ENCODE measurements at regions of chr7 and their contacts with region 1.

Region 1: GRCh38 chr7:157027568-157028198 is 17.2 kb upstream of the MNX1 start:
- DNase-seq: no peak
- ATAC-seq: no peak
- H3K4me3 Mint-ChIP-seq: no peak overlapping the region
- H3K27ac Mint-ChIP-seq: no peak overlapping the region
- H3K4me1 Mint-ChIP-seq: no peaks in the 10 kb centered on the region
- H3K27me3 Mint-ChIP-seq: peaks cover 65% of the 10 kb centered on the region

Region 2: GRCh38 chr7:156975620-156976019 is 52.1 kb before region 1 on chr7:
- CTCF ChIA-PET with region 1: no interaction called
- POLR2A ChIA-PET with region 1: no interaction called
- intact Hi-C with region 1: no loop called
- DNase-seq: no peak
- ATAC-seq: no peak
- H3K4me3 Mint-ChIP-seq: no peak overlapping the region
- H3K27ac Mint-ChIP-seq: no peak overlapping the region
- H3K4me1 Mint-ChIP-seq: no peaks in the 10 kb centered on the region
- H3K27me3 Mint-ChIP-seq: no peaks in the 10 kb centered on the region

Region 3: GRCh38 chr7:156993021-156993924 is 34.4 kb before region 1 on chr7:
- CTCF ChIA-PET with region 1: no interaction called
- POLR2A ChIA-PET with region 1: no interaction called
- intact Hi-C with region 1: loop called in 1 of 2 experiments (anchors 5 kb)
- DNase-seq: no peak
- ATAC-seq: no peak
- H3K4me3 Mint-ChIP-seq: no peak overlapping the region
- H3K27ac Mint-ChIP-seq: no peak overlapping the region
- H3K4me1 Mint-ChIP-seq: no peaks in the 10 kb centered on the region
- H3K27me3 Mint-ChIP-seq: peaks cover 28% of the 10 kb centered on the region

Region 4: DNA sequence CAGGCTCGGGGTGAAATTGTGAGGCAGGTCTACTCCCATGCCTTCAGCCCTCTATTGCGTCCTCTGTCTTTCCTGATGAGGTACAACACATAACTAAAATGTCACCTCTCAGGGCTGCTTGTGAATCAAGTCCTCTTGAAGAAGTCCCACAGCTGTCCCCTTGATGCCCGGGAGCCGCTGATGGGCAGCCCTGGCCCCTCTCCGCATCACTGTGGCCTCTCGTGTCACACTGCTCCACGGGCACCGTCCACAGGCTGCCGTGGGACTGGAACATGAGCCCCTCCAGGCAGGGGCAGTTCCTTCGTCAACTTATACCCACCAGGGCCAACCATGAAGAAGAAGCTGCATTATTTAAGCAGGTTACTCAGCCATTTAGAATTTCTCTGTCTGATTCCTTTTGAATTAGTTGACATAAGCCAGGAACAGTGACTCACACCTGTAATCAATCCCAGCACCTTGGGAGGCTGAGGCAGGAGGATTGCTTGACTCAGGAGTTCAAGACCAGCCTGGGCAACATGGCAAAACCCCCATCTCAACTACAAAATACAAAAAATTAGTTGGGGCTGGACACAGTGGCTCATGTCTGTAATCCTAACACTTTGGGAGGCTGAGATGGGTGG is 52.5 kb after region 1 on chr7:
- CTCF ChIA-PET with region 1: no interaction called
- POLR2A ChIA-PET with region 1: no interaction called
- intact Hi-C with region 1: no loop called
- DNase-seq: no peak
- ATAC-seq: no peak
- H3K4me3 Mint-ChIP-seq: no peak overlapping the region
- H3K27ac Mint-ChIP-seq: no peak overlapping the region
- H3K4me1 Mint-ChIP-seq: no peaks in the 10 kb centered on the region
- H3K27me3 Mint-ChIP-seq: peaks cover 33% of the 10 kb centered on the region

Region 5: DNA sequence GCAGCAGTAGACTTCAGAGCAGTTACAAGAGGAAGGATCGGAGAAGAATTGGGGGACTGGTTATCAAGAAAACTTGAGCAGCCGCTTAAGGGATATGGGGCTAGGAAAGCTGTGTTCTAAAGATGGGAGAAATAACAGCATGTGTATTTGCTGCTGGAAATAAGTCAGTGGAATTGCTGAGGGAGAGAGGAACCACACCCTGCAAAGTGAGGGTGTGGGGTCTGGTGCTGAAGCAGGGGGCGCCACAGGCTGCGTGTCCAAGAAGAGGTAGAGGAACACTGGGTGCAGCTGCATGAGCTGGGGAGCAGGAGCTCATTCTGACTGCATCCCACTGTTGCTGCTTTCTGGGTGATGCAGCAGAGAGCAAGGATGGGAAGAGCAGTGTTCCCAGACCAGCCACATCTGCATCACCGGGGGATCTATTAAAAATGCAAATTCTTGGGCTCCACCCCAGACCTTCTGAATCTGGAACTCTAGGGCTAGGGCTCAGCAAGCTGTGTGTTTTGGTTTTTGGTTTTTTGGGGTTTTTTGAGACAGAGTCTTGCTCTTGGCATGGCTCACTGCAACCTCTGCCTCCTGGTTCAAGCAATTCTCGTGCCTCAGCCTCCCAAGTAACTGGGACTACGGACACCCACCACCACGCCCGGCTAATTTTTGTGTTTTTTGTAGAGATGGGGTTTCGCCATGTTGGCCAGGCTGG is 212.0 kb after region 1 on chr7:
- CTCF ChIA-PET with region 1: no interaction called
- POLR2A ChIA-PET with region 1: no interaction called
- intact Hi-C with region 1: no loop called
- DNase-seq: no peak
- ATAC-seq: no peak
- H3K4me3 Mint-ChIP-seq: no peak overlapping the region
- H3K27ac Mint-ChIP-seq: no peak overlapping the region
- H3K4me1 Mint-ChIP-seq: no peaks in the 10 kb centered on the region
- H3K27me3 Mint-ChIP-seq: no peaks in the 10 kb centered on the region

Region 6: DNA sequence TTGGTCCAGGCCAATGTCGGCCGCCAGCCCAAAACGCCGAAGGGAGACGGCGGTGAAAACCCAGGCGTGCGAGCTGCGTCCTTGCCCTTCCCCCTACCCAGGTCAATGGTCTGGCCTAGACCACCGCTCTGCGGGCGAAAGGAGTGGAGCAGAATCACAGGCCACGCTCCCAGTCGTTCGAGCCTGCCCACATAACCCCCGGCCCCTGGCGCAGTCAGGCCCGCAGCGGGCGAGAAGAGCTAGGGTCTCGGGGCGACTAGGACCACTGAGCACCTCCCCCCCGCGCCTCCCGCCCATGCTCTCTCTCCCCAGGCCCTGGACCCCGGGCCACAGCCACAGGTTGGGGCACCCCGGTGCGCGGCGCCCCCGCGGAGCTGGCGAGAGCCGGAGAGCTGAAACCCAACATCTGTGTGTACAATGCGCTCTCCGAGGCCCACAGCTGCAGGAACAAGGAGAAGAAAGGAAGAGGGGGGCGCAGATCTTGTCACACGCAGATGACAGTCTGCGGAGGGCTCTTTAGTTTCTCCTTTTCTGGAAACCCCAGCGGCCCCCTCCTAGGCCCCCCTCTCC is 664.0 kb after region 1 on chr7:
- CTCF ChIA-PET with region 1: no interaction called
- POLR2A ChIA-PET with region 1: no interaction called
- intact Hi-C with region 1: no loop called
- DNase-seq: no peak
- ATAC-seq: no peak
- H3K4me3 Mint-ChIP-seq: peak overlapping the region; percentile 19
- H3K27ac Mint-ChIP-seq: no peak overlapping the region
- H3K4me1 Mint-ChIP-seq: peaks cover 16% of the 10 kb centered on the region
- H3K27me3 Mint-ChIP-seq: peaks cover 43% of the 10 kb centered on the region

Measured in activated CD4-positive, alpha-beta T cell treated with anti-CD3 and anti-CD28 coated beads for 36 hours (primary cell).